ENCODE measurements at regions of chr12 and their contacts with region 1.

Region 1: DNA sequence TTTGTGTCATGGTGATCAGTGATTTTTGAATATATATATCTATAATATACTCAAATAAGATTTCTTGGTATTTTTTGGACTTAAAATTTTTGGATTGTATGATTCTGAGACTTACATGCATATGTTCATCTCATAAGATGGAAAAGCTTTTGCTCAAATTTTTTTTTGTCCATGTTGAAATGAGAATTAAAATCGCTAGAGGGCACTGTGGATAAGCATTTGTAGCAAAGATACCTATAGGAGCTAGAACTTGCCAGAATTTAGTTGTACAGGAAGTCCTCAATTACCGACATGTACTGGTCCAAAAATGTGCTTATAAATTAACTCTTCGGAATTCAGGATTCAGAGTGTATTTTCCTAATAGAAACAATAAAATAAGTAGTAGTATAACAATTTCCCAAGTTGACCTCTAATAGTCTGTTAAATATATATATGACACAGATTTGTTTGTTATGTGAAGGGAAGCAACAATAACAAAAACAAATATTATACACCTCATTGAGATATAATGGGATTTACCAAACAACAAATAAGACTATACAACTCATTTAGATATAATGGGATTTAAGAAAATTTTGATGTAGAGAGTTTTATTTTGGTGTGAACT is 179.6 kb downstream of the TMEM117 start:
- DNase-seq: no peak
- ATAC-seq: peak; percentile 52

Region 2: GRCh38 chr12:44929236-44929885 is 913.9 kb after region 1 on chr12:
- intact Hi-C with region 1: loop called (anchors 10 kb)
- DNase-seq: no peak
- ATAC-seq: no peak